Psoas muscle (tissue), 8 donors: ENCODE measurements at regions of chr7 and their contacts with region 1.

Region 1: DNA sequence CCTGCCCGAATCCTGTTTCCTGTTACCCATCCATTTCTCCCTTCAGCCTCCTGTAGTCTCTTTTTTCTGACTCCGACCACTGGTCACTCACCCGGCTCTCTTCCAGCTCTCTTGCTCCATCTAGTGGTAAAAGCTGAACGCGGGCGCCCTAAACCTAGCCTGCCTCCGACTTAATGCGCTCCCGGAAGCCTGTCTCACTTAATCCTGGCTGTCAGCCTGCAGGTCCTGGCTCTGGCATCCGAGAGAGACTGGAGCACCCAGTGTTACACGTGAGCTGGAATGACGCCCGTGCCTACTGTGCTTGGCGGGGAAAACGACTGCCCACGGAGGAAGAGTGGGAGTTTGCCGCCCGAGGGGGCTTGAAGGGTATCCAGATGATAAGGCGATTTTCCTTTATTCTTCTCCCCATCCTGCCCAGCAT is 10.3 kb downstream of the SUMF2 start:
- DNase-seq: peak; percentile 79 to 89
- ATAC-seq: peak; percentile 85 to 91 (median 88)
- H3K4me3 ChIP-seq: no peak overlapping the region
- H3K27ac ChIP-seq: peak overlapping the region; percentile 27
- H3K4me1 ChIP-seq: peaks cover 12% of the 10 kb centered on the region
- H3K27me3 ChIP-seq: no peaks in the 10 kb centered on the region
- CTCF ChIP-seq: peak; percentile 87

Region 2: GRCh38 chr7:55432939-55433784 is 641.2 kb before region 1 on chr7:
- intact Hi-C with region 1: loop called in 1 of 2 experiments (anchors 10 kb)
- DNase-seq: no peak
- ATAC-seq: peak; percentile 72 to 84 (median 78)
- H3K4me3 ChIP-seq: no peak overlapping the region
- H3K27ac ChIP-seq: no peak overlapping the region
- H3K4me1 ChIP-seq: no peaks in the 10 kb centered on the region
- H3K27me3 ChIP-seq: no peaks in the 10 kb centered on the region
- CTCF ChIP-seq: peak; percentile 57

Region 3: GRCh38 chr7:55641273-55641691 is 433.1 kb before region 1 on chr7:
- intact Hi-C with region 1: loop called (anchors 1 to 10 kb)
- DNase-seq: no peak
- ATAC-seq: peak; percentile 85 to 99 (median 98)
- H3K4me3 ChIP-seq: no peak overlapping the region
- H3K27ac ChIP-seq: no peak overlapping the region
- H3K4me1 ChIP-seq: no peaks in the 10 kb centered on the region
- H3K27me3 ChIP-seq: no peaks in the 10 kb centered on the region
- CTCF ChIP-seq: peak; percentile 80

Region 4: DNA sequence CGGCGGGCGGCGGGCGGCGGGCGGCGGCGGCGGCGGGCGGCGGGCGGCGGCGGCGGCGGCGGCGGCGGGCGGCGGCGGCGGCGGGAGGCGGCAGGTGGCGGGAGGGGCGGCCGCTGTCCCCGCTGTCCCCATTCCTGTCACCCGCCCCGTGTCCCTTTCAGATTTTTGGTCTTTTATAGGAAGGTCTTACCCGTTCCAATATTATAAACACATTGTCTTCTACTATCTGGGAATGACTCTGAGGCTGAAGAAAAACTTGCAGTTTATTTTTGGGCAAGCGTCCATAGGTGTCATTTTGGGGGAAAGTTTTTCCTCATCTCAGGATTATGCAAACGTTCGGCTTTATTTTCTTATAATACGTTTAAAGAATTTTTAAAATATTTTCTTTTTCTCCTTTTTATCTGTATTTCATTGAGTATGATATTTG is 186.5 kb before region 1 on chr7:
- intact Hi-C with region 1: loop called in 1 of 2 experiments (anchors 10 kb)
- DNase-seq: peak in 1 of 2 donors; percentile 10
- ATAC-seq: no peak
- H3K4me3 ChIP-seq: peak overlapping the region; percentile 65
- H3K27ac ChIP-seq: peak overlapping the region; percentile 65
- H3K4me1 ChIP-seq: no peaks in the 10 kb centered on the region
- H3K27me3 ChIP-seq: peaks cover 0 to 2% (median 0%) of the 10 kb centered on the region in 3 donors
- CTCF ChIP-seq: no peak

Region 5: GRCh38 chr7:55928006-55928767 is 146.2 kb before region 1 on chr7:
- intact Hi-C with region 1: no loop called
- DNase-seq: no peak
- ATAC-seq: no peak
- H3K4me3 ChIP-seq: no peak overlapping the region
- H3K27ac ChIP-seq: no peak overlapping the region
- H3K4me1 ChIP-seq: no peaks in the 10 kb centered on the region
- H3K27me3 ChIP-seq: no peaks in the 10 kb centered on the region
- CTCF ChIP-seq: no peak

Region 6: DNA sequence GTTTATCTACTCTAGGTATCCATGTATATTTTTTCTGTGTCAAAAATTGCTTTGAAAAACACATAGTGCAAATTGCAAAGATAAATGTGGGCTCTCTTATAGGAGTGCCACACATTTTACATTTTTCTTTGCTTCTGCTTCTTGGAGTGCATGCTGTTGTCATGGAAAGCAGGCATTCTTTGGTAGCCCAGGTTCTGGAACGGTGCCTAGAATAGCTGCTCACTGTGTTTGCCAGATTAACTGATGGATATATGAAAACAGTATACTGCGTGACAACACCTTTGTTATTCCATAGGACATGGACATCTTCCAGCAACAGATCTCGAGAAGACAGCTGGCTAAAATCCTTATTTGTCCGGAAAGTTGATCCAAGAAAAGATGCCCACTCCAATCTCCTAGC is 96.5 kb before region 1 on chr7:
- intact Hi-C with region 1: no loop called
- DNase-seq: no peak
- ATAC-seq: no peak
- H3K4me3 ChIP-seq: no peak overlapping the region
- H3K27ac ChIP-seq: peak overlapping the region; percentile 89
- H3K4me1 ChIP-seq: peaks cover 42% of the 10 kb centered on the region
- H3K27me3 ChIP-seq: no peaks in the 10 kb centered on the region
- CTCF ChIP-seq: no peak

Region 7: GRCh38 chr7:56003749-56004148 is 70.6 kb before region 1 on chr7:
- intact Hi-C with region 1: loop called (anchors 2 kb)
- DNase-seq: no peak
- ATAC-seq: no peak
- H3K4me3 ChIP-seq: no peak overlapping the region
- H3K27ac ChIP-seq: no peak overlapping the region
- H3K4me1 ChIP-seq: no peaks in the 10 kb centered on the region
- H3K27me3 ChIP-seq: no peaks in the 10 kb centered on the region
- CTCF ChIP-seq: no peak